Activated CD4-positive, alpha-beta T cell treated with anti-CD3 and anti-CD28 coated beads, Interleukin-2, amount 10 ng/mL, durations not matched to agents 24 days and 14 days (primary cell): ENCODE measurements at regions of chr16 and their contacts with region 1.

Region 1: DNA sequence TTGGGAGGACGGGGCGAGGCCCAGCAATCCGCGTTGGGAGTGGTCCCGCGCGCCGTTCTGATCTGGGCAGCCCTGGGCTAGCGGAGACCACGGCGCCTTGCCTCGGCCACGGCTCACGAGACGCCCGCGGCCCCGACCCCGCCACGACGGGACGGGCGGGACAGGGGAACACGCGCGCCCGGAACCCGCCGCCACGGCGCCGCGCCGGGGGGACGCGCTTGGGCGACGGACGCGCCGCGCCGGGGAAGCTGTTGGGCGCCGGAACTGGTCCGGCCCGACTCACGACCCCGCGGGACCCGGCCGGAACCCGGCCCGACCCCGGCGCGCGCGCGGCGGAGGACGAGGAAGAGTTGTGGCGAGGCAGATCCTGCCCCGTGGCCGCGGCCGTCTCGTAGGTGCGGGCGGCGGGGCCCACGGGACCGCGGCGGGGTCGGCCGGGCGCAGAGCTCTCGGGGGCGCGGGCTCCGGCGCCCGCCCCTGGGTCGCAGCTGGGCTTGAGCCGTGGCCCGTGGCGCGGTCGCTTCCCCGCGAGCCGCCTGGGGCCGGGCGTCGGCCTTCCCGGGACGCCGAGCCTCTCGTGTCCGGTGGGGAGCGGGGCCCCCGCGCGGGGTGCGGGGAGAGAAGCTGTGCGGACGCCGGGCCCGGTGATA is at the start of gene ACSF3:
- DNase-seq: peak; percentile 93
- H3K4me3 Mint-ChIP-seq: peak within 1 kb of the TSS; percentile 99
- H3K27ac Mint-ChIP-seq: peak within 1 kb of the TSS; percentile 95
- H3K4me1 Mint-ChIP-seq: peaks cover 44% of the 10 kb centered on the region
- H3K27me3 Mint-ChIP-seq: peaks cover 16% of the 10 kb centered on the region
- total RNA-seq, gene ACSF3: 41.1 and 41.6 TPM in 2 replicates

Region 2: DNA sequence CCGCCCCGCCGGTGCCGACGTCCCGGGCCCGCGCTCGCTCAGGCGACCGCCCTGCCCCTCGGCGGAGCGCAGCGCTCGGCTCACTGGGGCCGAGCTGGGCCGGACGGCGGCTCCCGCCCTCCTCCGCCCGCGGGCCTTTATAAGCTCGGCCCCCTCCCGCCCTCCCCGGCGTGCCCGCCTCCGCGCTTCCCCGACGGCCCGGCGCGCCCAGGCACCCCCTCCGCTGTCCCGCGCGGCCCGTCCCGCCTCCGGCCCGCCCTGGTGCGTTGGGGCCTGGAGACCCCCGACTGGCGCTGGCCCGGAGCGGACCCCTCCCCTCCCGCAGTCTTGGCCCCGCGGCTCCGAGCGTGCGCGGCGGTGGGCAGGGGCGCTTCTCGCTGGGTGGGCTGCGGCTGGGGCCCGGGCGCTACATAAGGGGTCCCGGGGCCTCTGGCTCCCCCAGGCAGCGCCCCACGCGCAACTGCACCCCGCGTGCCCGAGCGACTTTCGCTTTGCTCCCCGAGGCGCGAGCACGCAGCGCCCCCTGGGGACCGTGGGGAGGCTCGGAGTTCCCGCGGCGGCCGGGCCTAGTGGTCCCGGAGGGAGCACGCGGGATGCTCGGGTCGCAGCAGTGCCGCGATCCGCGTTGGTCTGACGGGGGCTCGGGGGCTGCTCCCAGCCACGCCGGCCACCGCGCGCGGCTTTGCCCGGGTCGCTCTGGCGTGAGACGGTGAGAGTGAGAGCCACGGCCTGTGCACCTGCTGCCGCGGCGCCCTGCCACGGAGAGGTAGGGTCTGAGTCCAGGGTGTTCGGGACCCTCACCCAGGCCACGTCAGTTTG is 308.4 kb before region 1 on chr16 and contains the start of gene PIEZO1:
- intact Hi-C with region 1: no loop called
- DNase-seq: peak; percentile 96
- H3K4me3 Mint-ChIP-seq: peak within 1 kb of the TSS; percentile 81
- H3K27ac Mint-ChIP-seq: peak within 1 kb of the TSS; percentile 81
- H3K4me1 Mint-ChIP-seq: peaks cover 43% of the 10 kb centered on the region
- H3K27me3 Mint-ChIP-seq: no peaks in the 10 kb centered on the region
- total RNA-seq, gene PIEZO1: 219 and 226 TPM in 2 replicates

Region 3: DNA sequence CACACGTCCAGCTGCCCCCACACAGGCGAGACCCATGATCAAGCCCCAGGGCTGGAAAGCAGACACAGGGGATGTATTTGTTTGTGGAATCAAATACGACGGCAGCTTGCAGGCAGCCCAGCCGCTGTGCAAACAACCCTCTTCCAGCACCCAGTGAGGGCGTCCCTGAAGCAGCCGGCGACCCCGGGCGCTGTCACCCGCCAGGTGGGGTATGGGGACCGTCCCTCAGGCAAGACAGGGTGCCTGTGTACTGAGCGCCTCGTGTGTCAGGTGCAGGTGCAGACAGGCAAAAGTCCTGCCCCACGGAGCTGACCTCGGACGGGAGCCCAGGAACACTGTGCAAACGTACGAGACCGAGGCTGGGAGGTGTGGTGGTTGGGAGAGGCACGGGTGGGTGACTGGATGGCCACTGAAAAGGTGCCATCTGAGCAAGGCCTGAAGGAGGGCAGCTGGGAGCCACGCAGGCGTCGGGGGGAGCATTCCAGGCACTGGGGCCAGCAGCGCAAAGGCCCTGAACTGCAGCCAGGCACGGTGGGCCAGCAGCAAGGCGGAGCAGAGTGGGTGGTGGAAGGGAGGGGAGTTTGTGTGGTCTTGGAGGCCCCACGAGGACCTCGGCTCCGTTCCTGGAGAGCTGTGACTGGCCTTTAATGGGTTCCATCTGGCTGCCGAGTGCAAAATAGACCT is 165.2 kb before region 1 on chr16:
- intact Hi-C with region 1: no loop called
- DNase-seq: no peak
- H3K4me3 Mint-ChIP-seq: no peak overlapping the region
- H3K27ac Mint-ChIP-seq: no peak overlapping the region
- H3K4me1 Mint-ChIP-seq: no peaks in the 10 kb centered on the region
- H3K27me3 Mint-ChIP-seq: no peaks in the 10 kb centered on the region

Region 4: DNA sequence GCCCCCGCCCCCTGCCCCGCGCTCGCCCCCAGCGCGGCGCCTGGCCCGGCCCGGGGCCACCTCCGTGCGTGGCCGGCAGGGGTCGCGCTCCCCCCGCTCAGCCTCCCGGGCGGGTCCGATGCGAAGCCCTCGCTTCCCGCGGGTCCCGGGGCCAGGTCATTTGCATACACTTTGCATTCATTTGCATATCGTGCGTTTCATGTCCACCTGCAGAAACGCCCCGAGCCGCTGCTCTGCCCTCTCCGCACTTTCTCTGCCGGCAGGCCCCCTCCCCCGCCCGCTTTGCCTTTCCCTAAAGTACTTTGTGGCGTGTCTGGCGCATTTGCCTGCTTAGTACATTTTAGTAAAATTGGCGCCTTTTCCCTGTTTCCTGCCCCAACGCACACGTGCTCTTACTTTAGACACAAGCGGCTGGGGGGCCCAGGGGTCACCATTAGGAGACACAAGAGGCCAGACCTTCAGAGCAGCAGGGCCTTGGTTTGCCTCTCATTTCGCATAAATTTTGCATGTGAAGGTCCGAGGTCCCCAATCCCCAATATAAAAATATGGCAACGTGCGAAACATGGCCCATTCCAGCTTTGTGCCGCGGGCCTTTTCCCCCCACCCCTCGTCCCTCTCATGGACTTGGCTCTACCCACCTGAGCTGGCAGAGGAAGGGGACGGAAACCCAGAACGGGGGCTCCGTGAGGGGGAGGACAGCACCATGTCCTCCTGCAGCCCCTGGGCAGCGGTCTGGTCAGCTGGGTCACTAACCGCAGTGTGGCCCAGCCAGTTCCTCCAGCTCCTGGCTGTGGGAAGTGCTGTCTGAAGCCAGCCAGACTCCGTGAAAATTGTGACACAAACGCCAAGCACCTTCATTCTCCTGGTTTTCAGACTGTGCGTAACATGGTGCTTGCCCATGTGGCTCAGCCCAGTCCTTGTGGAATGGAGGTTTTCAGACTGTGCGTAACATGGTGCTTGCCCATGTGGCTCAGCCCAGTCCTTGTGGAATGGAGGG is 151.5 kb before region 1 on chr16:
- intact Hi-C with region 1: loop called (anchors 10 kb)
- DNase-seq: peak; percentile 85
- H3K4me3 Mint-ChIP-seq: peak overlapping the region; percentile 40
- H3K27ac Mint-ChIP-seq: no peak overlapping the region
- H3K4me1 Mint-ChIP-seq: no peaks in the 10 kb centered on the region
- H3K27me3 Mint-ChIP-seq: peaks cover 42% of the 10 kb centered on the region

Region 5: DNA sequence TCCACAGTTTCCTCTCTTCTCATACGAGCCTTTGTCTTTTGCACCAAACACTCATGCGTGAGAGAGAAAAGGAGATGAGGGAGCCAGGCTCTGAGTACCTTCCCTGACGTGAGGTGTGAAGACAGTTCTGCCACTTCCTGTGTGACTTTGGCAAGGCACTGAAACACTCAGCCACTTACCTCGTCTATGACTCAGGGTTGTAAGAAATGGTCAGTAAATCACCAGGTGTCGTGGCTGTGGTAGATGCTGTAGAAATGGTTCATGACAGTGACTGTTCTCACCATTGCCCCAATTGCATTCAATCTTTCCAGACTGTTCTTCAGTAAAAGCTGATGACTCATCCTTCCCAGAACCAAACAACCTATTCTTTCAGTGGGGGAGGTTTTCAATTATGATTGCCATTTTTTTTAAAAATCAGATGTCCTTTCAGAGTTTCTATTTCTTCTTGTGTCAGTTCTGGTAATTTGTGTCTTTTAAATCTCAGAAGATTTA is 67.6 kb before region 1 on chr16:
- intact Hi-C with region 1: loop called (anchors 1 kb)
- DNase-seq: peak; percentile 86
- H3K4me3 Mint-ChIP-seq: peak overlapping the region; percentile 16
- H3K27ac Mint-ChIP-seq: peak overlapping the region; percentile 75
- H3K4me1 Mint-ChIP-seq: peaks cover 18% of the 10 kb centered on the region
- H3K27me3 Mint-ChIP-seq: no peaks in the 10 kb centered on the region

Region 6: GRCh38 chr16:89115216-89115861 is 21.6 kb after region 1 on chr16:
- intact Hi-C with region 1: loop called (anchors 1 kb)
- DNase-seq: peak; percentile 96
- H3K4me3 Mint-ChIP-seq: peak overlapping the region; percentile 83
- H3K27ac Mint-ChIP-seq: peak overlapping the region; percentile 96
- H3K4me1 Mint-ChIP-seq: peaks cover 28% of the 10 kb centered on the region
- H3K27me3 Mint-ChIP-seq: no peaks in the 10 kb centered on the region

Region 7: DNA sequence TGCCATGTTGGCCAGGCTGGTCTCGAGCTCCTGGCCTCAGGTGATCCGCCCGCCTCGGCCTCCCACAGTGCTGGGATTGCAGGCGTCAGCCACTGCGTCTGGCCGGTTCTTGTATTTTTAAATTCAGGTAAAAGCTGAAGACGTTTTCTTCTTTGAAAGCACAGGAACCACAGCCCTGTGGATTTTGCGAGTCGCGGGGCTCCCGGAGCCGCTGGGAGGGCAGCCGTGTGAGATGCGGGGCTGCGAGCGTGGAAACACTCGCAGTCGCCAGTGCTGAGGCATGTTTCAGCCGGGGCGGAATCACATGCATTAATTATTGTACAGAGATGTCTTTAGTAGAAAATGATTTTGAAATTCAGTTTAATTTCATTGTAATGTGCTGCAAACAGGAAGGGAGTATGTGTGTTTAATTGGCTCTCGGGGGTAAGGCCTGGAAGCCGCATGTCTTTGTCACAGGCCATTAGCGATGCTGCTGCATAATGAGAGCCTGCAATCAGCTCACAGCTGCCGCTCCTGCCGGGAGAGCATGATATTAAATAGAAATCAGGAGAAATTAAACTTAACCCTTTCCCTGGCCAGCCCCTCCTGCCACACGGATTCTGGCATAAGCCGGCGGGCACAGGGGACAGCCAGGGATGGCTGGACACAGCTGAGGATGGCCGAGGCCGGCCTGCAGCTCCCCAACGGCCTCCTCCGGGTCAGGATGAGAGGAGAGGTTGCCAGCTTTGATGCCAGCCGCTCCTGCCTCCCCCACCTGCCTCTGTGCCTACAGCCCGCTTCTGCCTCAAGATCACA is 42.4 kb after region 1 on chr16:
- intact Hi-C with region 1: no loop called
- DNase-seq: no peak
- H3K4me3 Mint-ChIP-seq: no peak overlapping the region
- H3K27ac Mint-ChIP-seq: no peak overlapping the region
- H3K4me1 Mint-ChIP-seq: no peaks in the 10 kb centered on the region
- H3K27me3 Mint-ChIP-seq: no peaks in the 10 kb centered on the region

Region 8: DNA sequence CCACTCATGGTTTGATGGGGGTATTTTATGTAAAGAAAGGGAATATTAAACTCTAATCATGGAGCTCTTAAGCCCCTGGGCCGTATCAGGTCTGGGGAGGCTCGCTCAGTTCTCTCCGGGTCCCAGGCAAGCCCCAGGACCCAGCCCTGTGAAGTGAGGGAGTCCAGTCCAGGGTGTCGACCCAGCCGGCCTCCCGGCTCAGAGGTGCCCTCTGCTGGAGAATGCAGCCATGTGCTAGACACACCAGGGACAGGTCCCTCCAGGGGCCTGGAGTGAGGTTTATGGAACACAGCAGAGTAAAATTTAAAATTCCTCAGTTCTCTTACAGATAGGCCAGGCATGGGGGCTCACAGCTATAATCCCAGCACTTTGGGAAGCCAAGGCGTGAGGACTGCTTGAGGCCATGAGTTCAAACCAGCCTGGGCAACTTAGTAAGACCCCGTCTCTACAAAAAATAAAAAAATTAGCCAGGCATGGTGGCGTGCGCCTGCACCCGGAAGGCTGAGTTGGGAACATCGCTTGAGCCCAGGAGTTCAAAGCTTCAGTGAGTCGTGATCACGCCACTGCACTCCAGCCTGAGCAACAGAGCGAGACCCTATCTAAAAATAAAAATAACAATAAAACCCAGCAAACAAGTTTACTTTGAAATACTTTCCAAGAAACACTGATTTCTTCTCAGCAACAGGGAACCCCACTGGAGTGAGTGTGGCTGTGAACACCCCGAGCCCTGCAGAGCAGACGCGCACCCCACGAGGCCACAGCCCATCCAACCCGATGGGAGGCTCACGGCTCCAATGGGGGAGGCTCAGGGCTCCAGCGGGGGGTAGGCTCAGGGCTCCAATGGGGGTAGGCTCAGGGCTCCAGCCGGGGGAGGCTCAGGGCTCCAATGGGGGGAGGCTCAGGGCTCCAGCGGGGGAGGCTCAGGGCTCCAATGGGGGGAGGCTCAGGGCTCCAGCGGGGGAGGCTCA is 196.0 kb after region 1 on chr16:
- intact Hi-C with region 1: no loop called
- DNase-seq: peak; percentile 91
- H3K4me3 Mint-ChIP-seq: no peak overlapping the region
- H3K27ac Mint-ChIP-seq: peak overlapping the region; percentile 1
- H3K4me1 Mint-ChIP-seq: peaks cover 4% of the 10 kb centered on the region
- H3K27me3 Mint-ChIP-seq: no peaks in the 10 kb centered on the region